MCF 10A (cell line): ENCODE measurements at regions of chr6 and their contacts with region 1.

Region 1: GRCh38 chr6:3209114-3210023 is 18.1 kb downstream of the TUBB2B start:
- DNase-seq: peak; percentile 99
- H3K4me3 Mint-ChIP-seq: peak overlapping the region; percentile 61
- H3K27ac Mint-ChIP-seq: peak overlapping the region; percentile 94
- H3K4me1 Mint-ChIP-seq: peaks cover 26% of the 10 kb centered on the region
- H3K27me3 Mint-ChIP-seq: no peaks in the 10 kb centered on the region
- CTCF ChIP-seq: no peak

Region 2: GRCh38 chr6:3068329-3069214 is 140.8 kb before region 1 on chr6 and contains the start of gene RIPK1:
- CTCF ChIA-PET with region 1: interaction called, 3 read pairs
- POLR2A ChIA-PET with region 1: interaction called, 15 read pairs
- intact Hi-C with region 1: no loop called
- DNase-seq: peak; percentile 88
- H3K4me3 Mint-ChIP-seq: peak within 1 kb of the TSS; percentile 93
- H3K27ac Mint-ChIP-seq: peak within 1 kb of the TSS; percentile 93
- H3K4me1 Mint-ChIP-seq: peaks cover 12% of the 10 kb centered on the region
- H3K27me3 Mint-ChIP-seq: no peaks in the 10 kb centered on the region
- CTCF ChIP-seq: no peak
- total RNA-seq, gene RIPK1: 16.8 and 21.2 TPM in 2 replicates

Region 3: DNA sequence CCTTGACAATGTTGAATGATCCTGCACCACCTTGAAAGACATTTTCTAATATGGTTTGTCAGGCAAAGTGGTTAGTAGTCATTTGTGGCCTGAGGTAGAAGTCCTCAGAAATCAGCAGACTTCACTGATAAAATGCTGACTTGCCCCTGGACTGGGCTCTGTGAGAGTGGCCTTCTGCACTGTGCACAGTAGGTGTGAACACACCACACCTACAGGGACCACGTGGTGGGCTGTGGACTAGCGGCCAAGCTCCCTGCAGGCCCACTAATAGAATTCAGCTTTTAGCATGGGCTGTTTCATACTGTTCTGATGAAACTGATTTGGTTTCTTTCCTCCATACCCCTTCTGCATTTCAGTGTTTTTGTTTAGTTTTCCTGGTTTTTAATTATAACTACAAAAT is 83.6 kb before region 1 on chr6:
- CTCF ChIA-PET with region 1: interaction called, 7 read pairs
- POLR2A ChIA-PET with region 1: interaction called, 7 read pairs
- intact Hi-C with region 1: loop called (anchors 1 kb)
- DNase-seq: no peak
- H3K4me3 Mint-ChIP-seq: no peak overlapping the region
- H3K27ac Mint-ChIP-seq: no peak overlapping the region
- H3K4me1 Mint-ChIP-seq: no peaks in the 10 kb centered on the region
- H3K27me3 Mint-ChIP-seq: no peaks in the 10 kb centered on the region
- CTCF ChIP-seq: no peak

Region 4: GRCh38 chr6:3157131-3157927 is 52.0 kb before region 1 on chr6 and contains the start of gene TUBB2A:
- CTCF ChIA-PET with region 1: interaction called, 6 read pairs
- POLR2A ChIA-PET with region 1: interaction called, 28 read pairs
- intact Hi-C with region 1: loop called (anchors 1 kb)
- DNase-seq: peak; percentile 71
- H3K4me3 Mint-ChIP-seq: peak within 1 kb of the TSS; percentile 72
- H3K27ac Mint-ChIP-seq: peak within 1 kb of the TSS; percentile 69
- H3K4me1 Mint-ChIP-seq: no peaks in the 10 kb centered on the region
- H3K27me3 Mint-ChIP-seq: no peaks in the 10 kb centered on the region
- CTCF ChIP-seq: peak; percentile 78
- total RNA-seq, gene TUBB2A: 13.3 and 17.8 TPM in 2 replicates

Region 5: DNA sequence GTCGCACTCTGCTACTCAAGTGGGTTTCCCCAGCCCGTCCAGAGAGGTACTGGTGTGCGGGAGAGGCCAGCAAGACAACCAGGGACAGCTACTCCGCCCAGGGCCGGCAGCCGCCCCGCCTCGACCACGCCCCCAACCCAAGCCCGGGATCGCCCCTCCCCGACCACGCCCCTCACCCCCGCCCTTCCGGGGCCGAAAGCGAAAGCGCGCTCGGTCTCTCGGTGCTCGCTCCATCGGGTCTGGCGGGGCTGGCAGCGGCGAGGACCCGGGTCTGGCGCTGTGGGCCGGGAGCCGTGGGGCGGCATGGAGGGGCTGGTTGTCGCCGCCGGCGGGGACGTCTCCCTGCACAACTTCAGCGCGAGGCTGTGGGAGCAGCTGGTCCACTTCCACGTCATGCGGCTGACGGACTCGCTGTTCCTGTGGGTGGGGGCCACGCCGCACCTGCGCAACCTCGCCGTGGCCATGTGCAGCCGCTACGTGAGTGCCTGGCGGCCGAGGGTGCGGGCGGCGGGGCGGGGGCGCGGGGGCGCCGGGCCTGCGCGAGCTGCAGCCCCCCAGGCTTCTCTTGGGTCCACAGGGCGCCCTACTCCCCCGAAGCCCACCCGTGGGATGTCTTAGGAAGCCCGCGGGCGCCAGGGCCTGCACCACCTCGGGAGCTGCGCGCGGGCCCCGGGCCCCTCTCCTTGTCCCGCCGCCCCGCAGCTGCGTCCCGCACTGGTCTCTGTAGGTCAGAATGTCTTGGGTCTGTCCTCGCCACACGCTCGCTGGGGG is 49.5 kb after region 1 on chr6 and contains the start of gene PSMG4:
- CTCF ChIA-PET with region 1: no interaction called
- POLR2A ChIA-PET with region 1: interaction called, 19 read pairs
- intact Hi-C with region 1: no loop called
- DNase-seq: peak; percentile 87
- H3K4me3 Mint-ChIP-seq: peak within 1 kb of the TSS; percentile 97
- H3K27ac Mint-ChIP-seq: peak within 1 kb of the TSS; percentile 65
- H3K4me1 Mint-ChIP-seq: peaks cover 8% of the 10 kb centered on the region
- H3K27me3 Mint-ChIP-seq: no peaks in the 10 kb centered on the region
- CTCF ChIP-seq: no peak
- total RNA-seq, gene PSMG4: 27.9 and 40.0 TPM in 2 replicates

Region 6: DNA sequence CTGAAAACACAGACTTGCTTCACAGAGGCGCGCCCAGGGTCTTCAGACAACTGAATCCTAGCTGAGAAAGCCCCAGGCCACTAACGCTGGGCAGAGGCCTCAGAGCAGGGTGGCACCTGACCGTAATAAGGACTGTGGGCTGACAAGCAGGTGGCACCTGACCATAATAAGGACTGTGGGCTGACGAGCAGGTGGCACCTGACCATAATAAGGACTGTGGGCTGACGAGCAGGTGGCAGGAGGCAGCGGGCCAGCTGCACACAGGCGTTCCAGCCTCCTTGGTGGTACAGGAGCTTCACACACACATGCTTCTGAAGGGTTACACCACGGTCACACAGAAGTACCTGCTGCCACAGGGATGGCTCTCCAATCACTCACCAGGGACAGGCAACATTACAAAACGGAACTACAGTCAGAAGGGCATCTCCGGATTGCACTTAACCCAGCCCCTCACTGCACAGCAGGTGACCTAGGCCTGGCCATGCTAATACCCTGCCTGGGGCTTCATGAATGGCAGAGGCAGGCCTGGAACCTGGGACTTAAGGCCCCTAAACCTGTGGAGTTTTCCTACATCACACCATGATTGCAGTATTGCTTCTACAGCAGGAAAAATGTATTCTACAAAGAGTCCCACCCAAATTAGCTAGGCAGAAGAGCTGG is 100.2 kb after region 1 on chr6:
- CTCF ChIA-PET with region 1: no interaction called
- POLR2A ChIA-PET with region 1: no interaction called
- intact Hi-C with region 1: no loop called
- DNase-seq: no peak
- H3K4me3 Mint-ChIP-seq: no peak overlapping the region
- H3K27ac Mint-ChIP-seq: no peak overlapping the region
- H3K4me1 Mint-ChIP-seq: peaks cover 9% of the 10 kb centered on the region
- H3K27me3 Mint-ChIP-seq: no peaks in the 10 kb centered on the region
- CTCF ChIP-seq: no peak